ENCODE measurements at regions of chr11 and their contacts with region 1.

Region 1: DNA sequence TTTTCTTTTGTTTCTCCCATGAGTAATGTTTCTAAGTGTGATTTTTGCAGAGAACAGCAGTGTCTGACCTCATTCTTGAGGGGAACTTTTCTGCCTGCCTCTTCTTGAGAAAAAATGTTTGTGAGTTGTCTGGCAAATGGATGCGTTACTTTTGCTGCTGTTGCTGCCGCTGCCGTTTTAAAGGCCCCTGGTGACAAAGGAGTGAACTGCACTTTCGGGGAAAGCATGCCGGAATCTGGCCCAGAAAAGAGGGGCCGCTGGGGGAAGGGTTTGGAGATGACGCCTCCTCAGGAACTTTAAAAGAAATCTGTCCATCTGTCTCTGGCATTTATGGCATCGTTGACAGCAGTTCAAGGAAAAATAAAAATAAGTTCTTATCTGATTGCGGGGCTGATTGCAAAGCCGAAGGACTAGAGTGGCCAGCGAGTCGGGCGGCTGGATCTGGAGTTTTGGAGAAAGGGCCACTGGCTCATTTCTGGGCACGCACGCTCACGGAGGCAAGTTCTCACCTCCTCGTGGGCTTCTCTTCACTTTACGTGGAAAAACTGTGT is 16.5 kb downstream of the ZBTB16 start:
- DNase-seq: peak; percentile 65 to 72
- ATAC-seq: peak; percentile 28 to 46 (median 45)
- H3K4me3 ChIP-seq: peak overlapping the region; percentile 15
- H3K4me3 Mint-ChIP-seq: peak overlapping the region; percentile 82
- H3K27ac ChIP-seq: peak overlapping the region; percentile 96
- H3K27ac Mint-ChIP-seq: peak overlapping the region; percentile 89 to 100
- H3K4me1 ChIP-seq: peaks cover 90% of the 10 kb centered on the region
- H3K4me1 Mint-ChIP-seq: peaks cover 93 to 95% of the 10 kb centered on the region in 2 donors
- H3K27me3 ChIP-seq: no peaks in the 10 kb centered on the region
- H3K27me3 Mint-ChIP-seq: no peaks in the 10 kb centered on the region
- CTCF ChIP-seq: peak; percentile 76

Region 2: GRCh38 chr11:113859665-113860064 is 216.3 kb before region 1 on chr11:
- intact Hi-C with region 1: loop called (anchors 5 kb)
- DNase-seq: peak in 1 of 2 donors; percentile 30
- ATAC-seq: peak; percentile 58 to 83 (median 69)
- H3K4me3 ChIP-seq: no peak overlapping the region
- H3K4me3 Mint-ChIP-seq: peak overlapping the region; percentile 84
- H3K27ac ChIP-seq: peak overlapping the region; percentile 73
- H3K27ac Mint-ChIP-seq: peak overlapping the region; percentile 82 to 89
- H3K4me1 ChIP-seq: peaks cover 38% of the 10 kb centered on the region
- H3K4me1 Mint-ChIP-seq: peaks cover 57 to 64% of the 10 kb centered on the region in 2 donors
- H3K27me3 ChIP-seq: no peaks in the 10 kb centered on the region
- H3K27me3 Mint-ChIP-seq: no peaks in the 10 kb centered on the region
- CTCF ChIP-seq: no peak

Region 3: DNA sequence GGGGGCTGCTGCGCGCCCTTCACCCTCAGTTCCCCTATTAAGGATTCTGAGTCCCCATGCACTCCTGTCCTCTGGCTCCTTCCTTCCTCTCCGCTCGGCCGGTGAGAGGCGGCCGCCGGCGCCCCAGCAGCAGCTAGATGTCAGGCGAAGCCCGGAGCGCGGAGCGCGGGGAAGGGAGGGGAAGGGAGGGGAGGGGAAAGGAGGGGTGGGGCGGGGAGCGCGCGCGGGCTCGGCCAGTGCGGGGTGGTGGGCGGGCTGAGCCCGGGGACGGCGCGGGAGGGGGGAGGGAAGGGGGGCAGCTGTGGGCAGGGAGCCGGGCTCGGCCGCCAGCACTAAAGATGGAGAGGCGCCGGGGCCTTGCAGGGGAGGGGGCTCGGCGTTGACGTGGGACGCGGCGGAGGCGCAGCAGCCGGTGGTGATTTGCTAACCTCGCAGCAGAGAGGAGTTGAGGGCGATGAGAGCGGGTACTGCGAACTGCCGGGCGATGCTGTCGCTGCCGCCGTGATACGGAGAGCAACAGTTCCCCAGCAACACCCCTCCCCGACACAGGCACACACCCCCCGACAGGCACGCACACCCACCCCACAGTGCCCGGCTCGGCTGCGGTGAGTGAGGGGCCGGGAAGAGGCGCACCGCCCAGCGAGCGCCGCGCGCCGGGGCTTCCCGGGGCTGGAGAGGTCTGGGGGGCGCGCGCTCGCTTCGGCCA is 16.5 kb before region 1 on chr11 and contains the start of gene ZBTB16:
- intact Hi-C with region 1: loop called (anchors 1 kb)
- DNase-seq: peak; percentile 74 to 78
- ATAC-seq: peak; percentile 64 to 79 (median 77)
- H3K4me3 ChIP-seq: peak within 1 kb of the TSS; percentile 86
- H3K4me3 Mint-ChIP-seq: peak within 1 kb of the TSS; percentile 97
- H3K27ac ChIP-seq: peak within 1 kb of the TSS; percentile 90
- H3K27ac Mint-ChIP-seq: peak within 1 kb of the TSS; percentile 98 to 100
- H3K4me1 ChIP-seq: peaks cover 43% of the 10 kb centered on the region
- H3K4me1 Mint-ChIP-seq: peaks cover 32 to 49% of the 10 kb centered on the region in 2 donors
- H3K27me3 ChIP-seq: no peaks in the 10 kb centered on the region
- H3K27me3 Mint-ChIP-seq: no peaks in the 10 kb centered on the region
- CTCF ChIP-seq: no peak
- total RNA-seq, gene ZBTB16: 104 to 224 (median 156) TPM

Region 4: DNA sequence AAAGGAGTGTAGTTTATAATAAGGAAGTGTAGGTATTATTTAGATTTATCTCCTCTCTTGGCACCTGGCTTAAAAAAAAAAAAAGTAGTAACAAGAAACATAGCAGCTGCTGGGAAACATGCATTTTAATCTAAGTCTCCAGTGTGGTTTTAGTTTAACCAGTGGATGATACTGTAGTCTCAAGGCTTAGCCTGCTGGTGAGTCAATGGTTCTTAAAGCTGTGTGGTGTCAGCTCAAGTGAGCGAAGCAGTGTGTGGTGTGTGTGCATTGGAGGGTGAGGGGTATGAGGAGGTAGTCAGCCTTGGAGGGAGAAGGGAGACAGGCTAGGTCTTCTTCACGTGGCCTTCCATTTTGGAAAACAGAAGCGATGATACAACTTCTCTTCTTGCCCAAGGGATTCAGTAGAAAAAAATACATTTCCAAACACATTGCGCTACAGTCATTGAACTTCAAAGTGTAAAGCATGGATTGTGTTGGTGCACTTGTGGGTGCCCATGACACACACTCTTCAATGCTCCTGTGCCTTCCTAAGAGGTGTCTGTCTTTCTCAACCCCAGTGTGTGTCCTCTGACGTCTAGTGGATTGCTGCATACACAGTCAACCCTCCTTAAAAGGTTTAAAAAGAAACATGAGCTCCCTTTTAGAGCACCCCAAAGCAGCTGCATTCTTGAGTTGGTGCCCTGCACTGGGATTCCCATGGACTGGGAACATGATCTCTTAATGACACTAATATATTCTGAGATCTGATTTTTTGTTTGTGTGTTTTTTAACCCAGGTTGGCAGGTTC is 23.6 kb after region 1 on chr11:
- intact Hi-C with region 1: loop called (anchors 2 kb)
- DNase-seq: no peak
- ATAC-seq: peak; percentile 76 to 83 (median 78)
- H3K4me3 ChIP-seq: no peak overlapping the region
- H3K4me3 Mint-ChIP-seq: peak overlapping the region; percentile 65
- H3K27ac ChIP-seq: peak overlapping the region; percentile 22
- H3K27ac Mint-ChIP-seq: peak overlapping the region; percentile 84 to 100
- H3K4me1 ChIP-seq: peaks cover 57% of the 10 kb centered on the region
- H3K4me1 Mint-ChIP-seq: peaks cover 97 to 100% of the 10 kb centered on the region in 2 donors
- H3K27me3 ChIP-seq: no peaks in the 10 kb centered on the region
- H3K27me3 Mint-ChIP-seq: no peaks in the 10 kb centered on the region
- CTCF ChIP-seq: no peak

Region 5: GRCh38 chr11:114134870-114135269 is 58.9 kb after region 1 on chr11:
- intact Hi-C with region 1: loop called (anchors 5 kb)
- DNase-seq: no peak
- ATAC-seq: no peak
- H3K4me3 ChIP-seq: no peak overlapping the region
- H3K4me3 Mint-ChIP-seq: no peak overlapping the region
- H3K27ac ChIP-seq: no peak overlapping the region
- H3K27ac Mint-ChIP-seq: peak overlapping the region; percentile 85 to 88
- H3K4me1 ChIP-seq: peaks cover 83% of the 10 kb centered on the region
- H3K4me1 Mint-ChIP-seq: peaks cover 95 to 98% of the 10 kb centered on the region in 2 donors
- H3K27me3 ChIP-seq: no peaks in the 10 kb centered on the region
- H3K27me3 Mint-ChIP-seq: no peaks in the 10 kb centered on the region
- CTCF ChIP-seq: no peak

Region 6: DNA sequence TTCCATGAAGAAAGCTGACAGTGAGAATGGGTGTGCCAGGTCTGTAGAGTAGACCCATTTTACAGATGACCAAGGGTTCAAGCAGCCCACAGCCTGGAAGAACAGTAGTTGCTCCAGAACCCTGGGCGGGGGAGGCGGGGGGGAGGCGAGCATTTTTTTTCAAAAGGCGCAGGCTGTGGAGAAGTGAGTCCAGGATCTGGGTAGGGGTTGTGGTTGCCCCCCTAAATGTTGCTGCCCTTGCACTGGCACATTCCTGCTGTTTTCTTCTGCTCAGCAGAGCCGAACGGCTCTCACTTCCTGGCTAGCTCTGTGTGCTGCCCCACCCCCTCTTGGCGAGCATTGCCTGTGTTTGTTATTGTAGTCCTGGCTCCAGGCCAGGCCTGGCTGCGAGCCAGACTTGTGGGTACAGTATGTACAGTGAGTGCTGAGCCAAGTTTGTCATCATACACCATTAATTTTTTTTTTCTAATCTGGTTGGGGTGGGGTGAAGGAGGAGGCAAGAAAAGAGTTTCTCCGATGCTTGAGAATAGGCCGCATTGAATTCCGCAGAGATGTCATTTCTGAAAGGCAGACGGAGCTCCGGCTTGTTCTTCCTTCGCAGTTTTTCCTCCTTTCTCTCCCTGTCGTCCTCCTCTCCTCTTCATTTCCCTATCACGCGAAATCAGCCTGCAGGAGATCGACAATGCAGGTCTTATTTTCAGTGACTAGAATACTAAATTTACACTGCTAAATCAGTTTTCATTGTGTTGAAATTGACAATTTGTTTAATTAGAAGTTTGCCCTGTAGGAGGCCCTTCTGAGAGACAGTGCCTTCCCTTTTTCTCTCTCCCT is 84.1 kb after region 1 on chr11:
- intact Hi-C with region 1: no loop called
- DNase-seq: peak; percentile 98 to 99
- ATAC-seq: peak; percentile 92 to 97 (median 95)
- H3K4me3 ChIP-seq: peak overlapping the region; percentile 8
- H3K4me3 Mint-ChIP-seq: peak overlapping the region; percentile 86
- H3K27ac ChIP-seq: peak overlapping the region; percentile 73
- H3K27ac Mint-ChIP-seq: peak overlapping the region; percentile 85 to 92
- H3K4me1 ChIP-seq: peaks cover 94% of the 10 kb centered on the region
- H3K4me1 Mint-ChIP-seq: peaks cover 96 to 98% of the 10 kb centered on the region in 2 donors
- H3K27me3 ChIP-seq: no peaks in the 10 kb centered on the region
- H3K27me3 Mint-ChIP-seq: no peaks in the 10 kb centered on the region
- CTCF ChIP-seq: no peak

Region 7: DNA sequence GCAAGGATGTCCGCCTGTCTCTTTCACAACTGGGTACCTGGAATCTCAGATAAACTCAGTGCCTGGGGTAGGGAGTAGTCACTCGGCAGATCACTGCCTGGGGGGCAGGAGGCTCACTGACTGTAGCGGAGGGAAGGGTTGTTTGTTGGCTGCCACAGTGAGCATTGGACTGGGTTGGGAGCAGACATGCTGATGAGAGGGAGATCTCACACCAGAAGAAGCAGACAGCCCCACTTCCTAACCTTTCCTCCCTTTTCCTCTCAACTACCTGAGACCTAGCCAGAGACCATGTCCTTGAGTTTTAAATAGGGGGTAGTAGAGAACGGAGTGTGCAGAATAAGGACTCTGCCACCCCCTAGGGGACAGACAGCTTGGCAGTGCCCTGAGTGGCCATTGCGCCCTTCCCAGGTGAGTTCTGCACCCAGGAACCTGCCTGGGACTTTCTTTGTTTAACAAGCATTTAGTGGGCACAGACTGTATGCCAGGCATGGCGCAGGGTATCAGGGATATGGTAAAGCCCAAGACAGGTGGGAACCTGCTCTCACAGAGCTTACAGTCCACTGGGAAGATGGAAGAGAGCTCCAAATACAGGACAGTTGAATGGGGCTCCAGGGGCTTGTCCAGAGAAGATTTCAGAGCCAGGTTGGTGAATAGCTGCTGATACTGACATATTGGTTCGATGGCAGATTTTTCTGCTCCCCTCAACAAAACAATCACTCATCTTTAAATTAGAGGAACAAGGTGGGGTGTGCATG is 104.5 kb after region 1 on chr11:
- intact Hi-C with region 1: loop called (anchors 2 kb)
- DNase-seq: peak in 1 of 2 donors; percentile 53
- ATAC-seq: no peak
- H3K4me3 ChIP-seq: no peak overlapping the region
- H3K4me3 Mint-ChIP-seq: peak overlapping the region; percentile 35
- H3K27ac ChIP-seq: no peak overlapping the region
- H3K27ac Mint-ChIP-seq: peak overlapping the region; percentile 85 to 87
- H3K4me1 ChIP-seq: peaks cover 76% of the 10 kb centered on the region
- H3K4me1 Mint-ChIP-seq: peaks cover 93 to 96% of the 10 kb centered on the region in 2 donors
- H3K27me3 ChIP-seq: no peaks in the 10 kb centered on the region
- H3K27me3 Mint-ChIP-seq: no peaks in the 10 kb centered on the region
- CTCF ChIP-seq: peak; percentile 44